Activated T-helper 1 cell treated with anti-CD3 and anti-CD28 coated beads, Interleukin-12 subunit alpha, Interleukin-12 subunit beta, Interleukin-2, Interleukin-4 antibody, amounts not matched to agents 30 ng/mL and 10 ng/mL and 1 ng/mL, durations not matched to agents 14 hours and 24 hours and 36 hours (primary cell): ENCODE measurements at regions of chr9 and their contacts with region 1.

Region 1: DNA sequence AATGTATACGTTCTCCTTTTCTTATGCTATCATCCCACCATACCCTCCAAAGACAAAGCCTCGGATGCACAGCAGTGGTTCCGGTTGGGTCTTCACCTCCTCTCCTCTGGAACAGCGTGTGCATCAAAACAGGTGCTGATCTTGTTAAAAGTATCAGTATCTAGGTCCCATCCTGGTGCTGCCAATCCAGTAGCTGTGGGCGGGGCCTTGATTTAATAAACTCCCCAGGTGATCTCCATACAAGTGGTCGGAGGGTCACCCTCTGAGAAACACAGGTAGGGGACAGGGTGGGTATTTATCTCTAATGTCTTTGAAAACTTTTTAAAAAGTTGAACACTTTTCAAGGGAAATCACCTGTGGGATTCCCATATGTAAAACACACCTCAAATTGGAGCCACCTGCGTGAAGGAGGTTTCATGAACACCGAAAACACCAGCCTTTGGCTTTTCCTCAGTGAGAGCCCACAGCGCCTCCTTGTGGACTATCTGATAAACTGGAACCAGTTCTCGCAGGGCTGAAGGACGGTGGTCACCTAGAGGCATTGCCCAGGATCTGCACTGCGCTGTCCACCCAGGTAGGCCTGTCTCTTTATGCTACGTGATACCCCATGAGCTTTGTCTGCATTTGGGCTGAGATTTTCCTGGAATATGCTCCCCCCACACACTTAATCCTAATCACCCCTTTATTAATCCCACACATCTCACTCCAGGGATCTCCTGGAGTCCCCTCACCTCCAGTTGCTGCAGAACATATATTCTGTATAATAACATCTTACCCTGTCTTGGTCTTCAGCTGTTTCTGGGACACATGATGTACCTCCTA is 80.5 kb upstream of the EPB41L4B start:
- DNase-seq: no peak
- H3K4me3 Mint-ChIP-seq: peak overlapping the region; percentile 19
- H3K27ac Mint-ChIP-seq: peak overlapping the region; percentile 74
- H3K4me1 Mint-ChIP-seq: peaks cover 45% of the 10 kb centered on the region
- H3K27me3 Mint-ChIP-seq: peaks cover 8% of the 10 kb centered on the region

Region 2: DNA sequence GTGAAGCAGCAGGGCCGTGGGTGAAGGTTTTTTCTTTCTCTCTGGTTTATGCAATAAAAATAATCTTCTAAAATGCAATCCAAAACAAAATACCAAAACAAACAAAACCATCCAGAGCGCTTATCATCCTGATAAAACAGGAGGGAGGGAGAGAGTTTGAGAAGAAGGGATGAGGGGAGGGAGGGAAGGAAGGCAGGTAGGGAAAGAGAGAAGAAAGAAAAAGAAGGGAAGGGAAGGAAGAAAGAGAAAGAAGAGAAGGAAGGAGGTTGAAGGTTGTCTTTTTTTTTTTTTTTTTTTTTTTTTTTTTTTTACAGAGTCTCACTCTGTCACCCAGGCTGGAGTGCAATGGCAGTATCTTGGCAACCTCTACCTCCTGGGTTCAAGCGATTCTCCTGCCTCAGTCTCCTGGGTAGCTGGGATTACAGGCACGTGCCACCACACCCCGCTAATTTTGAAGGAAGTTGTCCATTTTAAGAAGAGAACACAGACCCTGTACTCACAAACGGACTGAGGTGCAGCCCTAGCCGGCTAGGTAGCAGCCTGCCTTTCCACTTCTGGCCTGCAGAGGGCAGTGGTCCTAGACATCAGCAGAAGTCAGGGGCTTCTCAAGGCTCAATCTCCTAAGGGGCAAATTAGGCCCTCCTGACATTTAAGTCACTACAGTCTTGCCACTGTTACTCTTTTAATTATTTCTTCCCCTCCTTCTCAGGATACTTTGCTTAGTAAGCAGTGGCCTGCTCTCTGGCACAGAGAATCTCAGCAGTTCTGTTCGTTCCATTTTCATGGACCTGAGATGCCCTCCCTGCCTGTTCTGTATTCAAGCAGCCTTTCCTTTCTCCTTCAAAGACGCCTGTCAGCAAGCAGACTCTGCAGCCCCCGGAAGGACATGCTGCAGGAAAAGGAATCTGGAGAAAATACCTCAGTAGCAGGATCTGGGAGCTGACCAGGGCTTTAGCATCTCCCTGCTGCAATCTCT is 156.9 kb before region 1 on chr9:
- intact Hi-C with region 1: loop called (anchors 2 kb)
- DNase-seq: peak; percentile 42
- H3K4me3 Mint-ChIP-seq: no peak overlapping the region
- H3K27ac Mint-ChIP-seq: no peak overlapping the region
- H3K4me1 Mint-ChIP-seq: no peaks in the 10 kb centered on the region
- H3K27me3 Mint-ChIP-seq: peaks cover 29% of the 10 kb centered on the region

Region 3: GRCh38 chr9:109379513-109379912 is 21.9 kb before region 1 on chr9:
- intact Hi-C with region 1: no loop called
- DNase-seq: no peak
- H3K4me3 Mint-ChIP-seq: no peak overlapping the region
- H3K27ac Mint-ChIP-seq: no peak overlapping the region
- H3K4me1 Mint-ChIP-seq: no peaks in the 10 kb centered on the region
- H3K27me3 Mint-ChIP-seq: no peaks in the 10 kb centered on the region

Region 4: DNA sequence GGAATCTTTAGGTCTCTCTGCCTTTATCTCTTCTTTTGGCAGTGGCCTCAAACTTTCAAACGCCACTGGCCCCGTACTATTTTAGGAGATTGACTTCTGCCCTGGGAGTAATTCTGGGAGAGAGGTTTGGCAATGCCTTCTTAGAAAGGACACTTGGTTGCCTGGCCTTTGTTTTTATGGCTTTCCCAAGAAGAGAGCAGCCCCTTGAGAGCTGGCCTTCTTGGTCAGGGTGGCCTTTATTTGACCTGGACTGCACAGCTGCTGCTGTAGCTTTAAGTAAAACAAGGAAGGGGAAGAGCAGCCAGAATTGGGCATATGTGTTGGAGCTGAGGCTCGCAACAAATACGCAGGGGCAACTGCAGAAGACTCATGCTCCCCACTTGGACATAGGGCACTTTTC is 35.9 kb after region 1 on chr9:
- intact Hi-C with region 1: no loop called
- DNase-seq: no peak
- H3K4me3 Mint-ChIP-seq: no peak overlapping the region
- H3K27ac Mint-ChIP-seq: no peak overlapping the region
- H3K4me1 Mint-ChIP-seq: peaks cover 32% of the 10 kb centered on the region
- H3K27me3 Mint-ChIP-seq: peaks cover 14% of the 10 kb centered on the region

Region 5: GRCh38 chr9:109903515-109904138 is 502.2 kb after region 1 on chr9:
- intact Hi-C with region 1: no loop called
- DNase-seq: peak; percentile 50
- H3K4me3 Mint-ChIP-seq: no peak overlapping the region
- H3K27ac Mint-ChIP-seq: peak overlapping the region; percentile 0
- H3K4me1 Mint-ChIP-seq: peaks cover 56% of the 10 kb centered on the region
- H3K27me3 Mint-ChIP-seq: no peaks in the 10 kb centered on the region